PC-9 (cell line): ENCODE measurements at regions of chr6 and their contacts with region 1.

Region 1: DNA sequence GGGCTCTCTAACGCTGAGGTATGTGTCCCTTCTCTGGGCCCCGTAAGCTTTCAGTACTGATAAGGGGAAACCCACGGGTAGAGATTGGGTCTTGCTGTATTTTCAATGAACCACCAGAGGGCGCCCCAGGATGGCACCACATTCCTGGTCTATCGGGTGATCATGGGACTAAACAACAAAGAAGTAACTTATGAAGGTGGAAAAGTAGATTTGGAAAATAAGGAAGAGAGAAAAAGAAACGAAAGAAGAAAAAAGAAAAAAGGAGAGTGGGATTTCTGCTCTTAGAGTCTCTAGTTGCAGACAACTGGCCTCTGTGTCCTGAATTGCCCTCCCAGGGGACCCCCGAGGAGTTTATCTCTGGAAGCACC is 93.8 kb downstream of the GMPR start:
- DNase-seq: peak; percentile 62 to 76
- H3K4me3 ChIP-seq: no peak overlapping the region
- H3K27ac ChIP-seq: no peak overlapping the region
- H3K4me1 ChIP-seq: peaks cover 40% of the 10 kb centered on the region
- H3K27me3 ChIP-seq: no peaks in the 10 kb centered on the region
- CTCF ChIP-seq: peak; percentile 92

Region 2: DNA sequence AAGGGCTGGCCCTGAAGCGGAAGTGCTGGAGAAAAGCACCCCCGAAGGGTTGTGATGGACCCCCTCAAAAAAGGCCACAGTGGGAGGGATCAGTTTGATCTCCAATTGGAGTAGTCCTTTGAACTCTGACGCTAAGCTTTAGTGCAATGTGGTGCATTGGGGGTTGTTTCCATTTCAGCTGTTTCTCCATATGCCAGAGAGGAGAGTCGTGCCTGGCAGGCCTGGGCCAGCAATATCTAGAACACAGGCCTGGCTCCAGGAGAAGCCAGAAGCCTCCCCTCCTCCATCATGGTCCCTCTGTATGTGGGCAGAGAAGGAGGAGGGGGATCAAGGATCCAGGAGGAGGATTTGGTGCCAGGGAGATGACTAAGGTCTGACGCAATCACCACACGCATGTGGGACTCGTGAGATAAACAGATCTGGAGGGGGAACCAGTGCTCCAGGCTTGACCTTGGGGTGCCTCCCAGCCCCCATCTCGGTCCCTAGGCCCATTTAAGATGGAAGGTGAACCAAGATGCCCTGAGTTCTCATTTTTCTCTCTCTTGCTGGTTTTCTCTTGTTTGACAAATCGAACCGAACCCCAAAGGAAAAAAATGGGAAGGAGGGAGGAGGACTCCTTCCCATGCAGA is 1603.6 kb before region 1 on chr6:
- CTCF ChIA-PET with region 1: no interaction called
- POLR2A ChIA-PET with region 1: no interaction called
- intact Hi-C with region 1: no loop called
- DNase-seq: no peak
- H3K4me3 ChIP-seq: no peak overlapping the region
- H3K27ac ChIP-seq: no peak overlapping the region
- H3K4me1 ChIP-seq: peaks cover 33% of the 10 kb centered on the region
- H3K27me3 ChIP-seq: no peaks in the 10 kb centered on the region
- CTCF ChIP-seq: no peak

Region 3: DNA sequence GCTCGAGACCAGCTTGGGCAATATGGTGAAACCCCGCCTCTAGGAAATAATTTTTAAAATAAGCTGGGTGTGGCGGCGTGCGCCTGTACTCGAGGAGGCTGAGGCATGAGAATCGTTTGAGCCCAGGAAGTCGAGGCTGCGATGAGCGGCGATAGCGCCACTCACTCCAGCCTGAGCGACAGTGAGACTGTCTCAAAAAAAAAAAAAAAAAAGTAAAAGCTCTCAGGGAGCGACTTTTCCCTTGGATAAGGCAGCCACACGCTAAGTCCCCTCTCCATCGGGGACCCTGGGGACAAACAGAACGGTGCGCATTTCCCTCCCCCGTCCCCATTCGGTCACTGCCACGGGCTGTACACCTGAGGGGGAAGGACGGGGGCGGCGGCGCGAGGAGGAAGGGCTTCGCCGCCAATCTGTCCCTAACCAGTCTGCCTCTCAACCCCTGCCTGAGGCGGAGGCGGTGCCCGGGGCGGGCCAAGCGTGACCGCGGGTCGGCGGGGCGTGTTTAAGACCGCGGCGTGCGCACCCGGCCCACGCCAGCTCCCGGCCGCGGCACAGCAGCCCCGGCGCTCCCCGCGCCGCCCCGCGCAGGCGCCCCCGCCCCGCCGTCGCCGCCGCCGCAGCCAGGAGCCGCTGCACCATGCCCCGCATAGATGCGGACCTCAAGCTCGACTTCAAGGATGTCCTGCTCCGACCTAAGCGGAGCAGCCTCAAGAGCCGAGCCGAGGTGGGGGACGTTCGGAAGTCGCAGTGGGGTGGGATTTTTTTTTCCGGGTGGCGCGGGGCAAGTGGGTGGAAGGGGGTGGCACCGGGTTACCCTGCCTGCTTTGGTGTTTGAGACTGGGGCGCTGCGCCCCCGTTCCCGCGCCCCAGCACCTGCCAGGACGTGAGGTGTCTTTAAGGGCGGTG is 93.8 kb before region 1 on chr6 and contains the start of gene GMPR:
- CTCF ChIA-PET with region 1: interaction called, 6 read pairs
- POLR2A ChIA-PET with region 1: no interaction called
- intact Hi-C with region 1: loop called (anchors 5 kb)
- DNase-seq: peak in 1 of 2 experiments; percentile 71
- H3K4me3 ChIP-seq: peak within 1 kb of the TSS; percentile 54
- H3K27ac ChIP-seq: no peak within 1 kb of the TSS
- H3K4me1 ChIP-seq: peaks cover 10% of the 10 kb centered on the region; the same call in 1 of the 2 replicates
- H3K27me3 ChIP-seq: peaks cover 64% of the 10 kb centered on the region
- CTCF ChIP-seq: no peak
- total RNA-seq, gene GMPR: 2.0 and 2.4 TPM in 2 replicates

Region 4: DNA sequence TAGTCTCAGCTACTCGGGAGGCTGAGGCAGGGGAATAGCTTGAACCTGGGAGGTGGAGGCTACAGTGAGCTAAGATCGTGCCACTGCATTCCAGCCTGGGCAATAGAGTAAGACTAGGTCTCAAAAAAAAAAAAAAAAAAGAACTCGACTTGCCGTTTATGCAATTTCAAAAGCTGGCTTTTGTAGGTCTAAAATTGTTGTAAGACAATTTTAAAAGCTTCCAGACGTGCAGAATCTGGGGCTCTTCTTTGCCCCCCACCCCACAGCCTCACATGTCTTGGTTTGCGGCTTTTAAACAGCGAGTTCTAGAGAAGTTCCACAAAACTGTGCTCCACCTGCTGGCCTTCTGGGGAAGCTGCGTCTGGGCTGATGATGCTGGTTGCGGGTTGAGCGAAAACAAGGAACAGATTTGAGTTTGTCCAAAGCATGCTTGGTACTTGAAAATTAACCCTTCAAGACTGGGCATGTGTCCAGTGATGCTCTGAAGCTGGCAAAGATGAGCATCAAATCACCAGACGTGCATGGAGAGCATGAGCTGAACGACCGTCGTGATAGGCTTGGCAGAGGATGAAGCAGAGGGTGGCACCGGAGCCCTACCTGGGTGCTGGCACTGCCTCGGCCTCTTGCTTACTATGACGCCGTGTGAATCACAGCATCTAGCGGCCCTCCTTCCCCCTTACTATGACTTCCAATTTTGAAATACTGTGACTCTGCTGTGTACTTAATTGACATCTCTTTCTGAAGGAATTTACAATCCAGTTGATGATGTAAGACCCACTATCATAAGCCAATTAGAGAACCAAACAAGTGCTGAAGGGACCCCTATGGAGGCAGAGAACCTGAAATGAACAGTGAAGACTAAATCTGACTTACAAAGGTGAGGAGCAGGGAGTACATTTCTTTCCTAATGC is 77.6 kb after region 1 on chr6:
- CTCF ChIA-PET with region 1: no interaction called
- POLR2A ChIA-PET with region 1: no interaction called
- intact Hi-C with region 1: loop called (anchors 2 kb)
- DNase-seq: no peak
- H3K4me3 ChIP-seq: no peak overlapping the region
- H3K27ac ChIP-seq: no peak overlapping the region
- H3K4me1 ChIP-seq: no peaks in the 10 kb centered on the region
- H3K27me3 ChIP-seq: no peaks in the 10 kb centered on the region
- CTCF ChIP-seq: peak; percentile 66

Region 5: DNA sequence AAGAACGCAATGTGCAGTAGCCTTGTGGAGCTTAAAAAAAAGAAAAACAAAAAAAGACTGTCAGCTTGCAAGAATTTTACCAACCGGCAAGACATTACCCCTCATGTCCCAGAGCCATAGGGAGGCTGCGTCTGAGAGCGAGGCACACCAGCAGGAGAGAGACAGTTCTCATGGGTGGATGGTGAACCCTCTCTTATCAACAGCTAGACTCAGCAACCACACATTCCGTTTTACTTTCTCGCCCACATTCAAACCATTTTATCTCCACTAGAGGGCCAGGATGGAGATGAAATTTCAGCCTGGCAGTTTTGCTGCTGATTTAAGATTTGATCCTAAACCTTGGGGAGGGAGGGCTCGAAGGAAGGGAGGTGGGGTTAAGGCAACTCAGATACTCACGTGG is 182.1 kb after region 1 on chr6:
- CTCF ChIA-PET with region 1: no interaction called
- POLR2A ChIA-PET with region 1: no interaction called
- intact Hi-C with region 1: loop called (anchors 5 kb)
- DNase-seq: no peak
- H3K4me3 ChIP-seq: no peak overlapping the region
- H3K27ac ChIP-seq: no peak overlapping the region
- H3K4me1 ChIP-seq: no peaks in the 10 kb centered on the region
- H3K27me3 ChIP-seq: no peaks in the 10 kb centered on the region
- CTCF ChIP-seq: peak; percentile 53

Region 6: DNA sequence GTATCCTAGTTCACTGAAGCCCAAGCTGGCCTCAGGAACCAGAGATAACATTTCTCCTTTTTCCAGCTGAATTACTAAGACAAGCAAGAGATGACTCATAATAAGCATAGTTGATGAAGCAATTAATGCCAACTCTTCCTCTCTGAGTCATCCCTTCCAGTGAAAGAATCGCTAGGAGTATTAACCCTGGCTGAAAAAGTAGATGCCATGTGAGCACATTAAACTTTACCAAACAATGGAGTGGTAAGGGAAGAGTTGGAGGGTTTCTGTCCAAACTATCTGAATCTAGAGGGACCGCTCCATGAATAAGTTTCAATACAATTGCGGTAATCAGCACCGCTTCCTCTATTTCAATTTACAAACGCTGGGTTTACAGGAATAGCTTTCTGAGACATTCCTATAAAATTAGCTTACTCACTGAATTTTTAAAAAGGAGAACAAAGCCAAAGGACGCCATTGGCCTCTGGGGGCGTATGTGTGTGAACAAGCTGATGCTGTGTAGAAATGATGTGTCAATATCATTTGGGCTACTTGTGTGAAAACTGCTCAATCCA is 380.8 kb after region 1 on chr6:
- CTCF ChIA-PET with region 1: no interaction called
- POLR2A ChIA-PET with region 1: no interaction called
- intact Hi-C with region 1: loop called (anchors 2 kb)
- DNase-seq: peak; percentile 45 to 95
- H3K4me3 ChIP-seq: peak overlapping the region; percentile 34; the same call in 1 of the 2 replicates
- H3K27ac ChIP-seq: peak overlapping the region; percentile 95
- H3K4me1 ChIP-seq: peaks cover 33% of the 10 kb centered on the region
- H3K27me3 ChIP-seq: no peaks in the 10 kb centered on the region
- CTCF ChIP-seq: peak; percentile 68

Region 7: DNA sequence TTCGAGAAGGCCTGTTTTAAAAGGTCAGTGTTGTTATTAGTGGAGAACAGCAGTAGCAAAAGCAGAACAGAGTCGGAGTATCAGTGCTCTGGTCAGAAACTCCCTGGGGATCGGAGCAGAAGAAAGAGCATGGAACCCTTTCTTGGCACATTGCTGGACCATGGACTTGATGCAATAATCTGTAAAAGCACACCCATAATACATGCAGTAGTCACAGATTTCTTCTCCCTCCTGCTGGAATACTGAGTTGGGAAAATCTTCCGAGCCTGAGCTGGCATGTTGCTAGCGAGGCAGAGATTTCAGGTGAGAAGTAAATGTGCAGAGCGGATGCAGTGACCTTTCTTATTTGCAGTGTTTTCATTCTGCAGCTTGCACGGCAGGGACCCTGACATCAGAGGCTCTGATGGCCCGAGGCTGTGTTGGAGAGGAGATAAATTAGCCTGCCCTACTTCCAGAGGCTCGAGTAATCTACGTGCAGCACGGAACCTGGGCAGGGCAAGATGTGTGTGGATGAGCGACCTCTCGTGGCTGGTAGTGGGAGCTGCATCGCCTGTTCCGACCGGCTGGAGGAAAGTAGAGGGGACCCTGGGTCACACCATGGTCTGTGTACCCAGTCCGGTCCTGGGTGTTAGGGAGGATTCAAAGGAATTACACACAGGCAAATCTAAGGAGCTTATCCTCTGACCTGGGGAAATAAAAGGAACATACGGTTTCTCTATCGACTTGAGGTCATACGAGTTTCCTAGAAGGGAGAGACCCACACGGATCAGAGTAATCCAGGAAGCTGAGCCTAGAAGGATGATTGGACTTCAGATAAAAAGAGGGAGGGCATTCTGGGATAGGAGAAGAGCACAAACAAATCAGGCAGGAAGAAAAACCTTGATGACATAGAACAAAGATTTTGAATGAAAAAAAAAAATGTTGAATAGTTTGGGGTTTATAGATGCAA is 632.7 kb after region 1 on chr6:
- CTCF ChIA-PET with region 1: interaction called, 5 read pairs
- POLR2A ChIA-PET with region 1: no interaction called
- intact Hi-C with region 1: loop called (anchors 1 kb)
- DNase-seq: peak; percentile 77 to 82
- H3K4me3 ChIP-seq: 0 out of 2 replicates have a peak overlapping the region, but pooled peaks have one; percentile 22
- H3K27ac ChIP-seq: no peak overlapping the region
- H3K4me1 ChIP-seq: peaks cover 13% of the 10 kb centered on the region
- H3K27me3 ChIP-seq: no peaks in the 10 kb centered on the region
- CTCF ChIP-seq: peak; percentile 92